ENCODE measurements at regions of chr19 and their contacts with region 1.

Region 1: GRCh38 chr19:3970808-3971598 is at the start of gene DAPK3:
- DNase-seq: peak; percentile 81
- H3K4me3 ChIP-seq: peak within 1 kb of the TSS; percentile 99
- H3K27me3 ChIP-seq: no peaks in the 10 kb centered on the region
- CTCF ChIP-seq: no peak
- polyA plus RNA-seq, gene DAPK3: 132 and 178 TPM in 2 replicates

Region 2: DNA sequence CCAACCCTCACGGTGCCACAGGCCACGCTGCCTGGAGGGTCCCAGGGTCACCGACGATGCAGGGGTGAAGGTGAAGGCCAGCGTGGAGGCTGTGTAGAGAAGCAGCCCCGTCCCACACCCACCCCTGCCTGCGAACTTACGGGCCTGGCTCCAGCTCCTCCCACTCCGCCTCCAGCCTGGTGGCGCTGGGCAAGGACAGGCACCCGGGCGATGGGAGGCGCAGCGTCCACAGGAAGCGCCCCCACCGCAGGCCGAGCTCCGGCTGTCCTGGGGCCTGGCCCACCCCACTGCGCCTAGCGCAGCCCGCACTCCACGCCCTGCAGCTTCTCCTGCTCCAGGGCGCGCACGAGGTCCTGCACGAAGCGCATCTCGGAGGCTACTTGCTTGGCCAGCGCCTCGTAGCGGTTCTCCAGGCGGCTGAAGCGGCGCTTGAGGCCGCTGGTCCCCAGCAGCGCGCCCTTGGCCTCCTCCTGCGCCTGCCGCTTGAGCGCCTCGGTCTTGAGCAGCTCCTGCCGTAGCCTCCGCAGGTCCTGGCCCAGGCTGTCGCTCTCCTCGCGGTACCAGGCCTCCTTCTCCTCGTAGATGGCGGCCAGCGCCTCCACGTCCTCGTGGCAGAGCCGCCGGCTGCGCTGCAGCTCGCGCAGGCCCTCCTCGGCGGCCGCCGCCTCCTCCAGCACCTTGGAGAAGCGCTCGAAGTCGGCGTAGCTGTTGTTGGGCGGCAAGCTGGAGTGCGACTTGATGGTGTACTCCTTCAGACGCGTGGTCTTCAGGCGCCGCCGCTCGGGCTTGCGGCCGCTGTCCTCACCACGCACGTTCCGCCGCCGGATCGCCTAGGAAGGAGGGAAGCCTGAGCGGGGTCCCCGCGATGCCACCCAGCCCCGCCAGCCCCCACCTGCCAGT is 11.9 kb before region 1 on chr19:
- CTCF ChIA-PET with region 1: no interaction called
- POLR2A ChIA-PET with region 1: interaction called, 13 read pairs
- DNase-seq: no peak
- H3K4me3 ChIP-seq: no peak overlapping the region
- H3K27me3 ChIP-seq: no peaks in the 10 kb centered on the region
- CTCF ChIP-seq: no peak

Region 3: GRCh38 chr19:3984908-3985642 is 14.1 kb after region 1 on chr19 and contains the start of gene EEF2:
- CTCF ChIA-PET with region 1: interaction called, 14 read pairs
- POLR2A ChIA-PET with region 1: interaction called, 18 read pairs
- DNase-seq: no peak
- H3K4me3 ChIP-seq: peak within 1 kb of the TSS; percentile 68
- H3K27me3 ChIP-seq: no peaks in the 10 kb centered on the region
- CTCF ChIP-seq: no peak
- polyA plus RNA-seq, gene EEF2: 1,661 and 2,469 TPM in 2 replicates

Region 4: DNA sequence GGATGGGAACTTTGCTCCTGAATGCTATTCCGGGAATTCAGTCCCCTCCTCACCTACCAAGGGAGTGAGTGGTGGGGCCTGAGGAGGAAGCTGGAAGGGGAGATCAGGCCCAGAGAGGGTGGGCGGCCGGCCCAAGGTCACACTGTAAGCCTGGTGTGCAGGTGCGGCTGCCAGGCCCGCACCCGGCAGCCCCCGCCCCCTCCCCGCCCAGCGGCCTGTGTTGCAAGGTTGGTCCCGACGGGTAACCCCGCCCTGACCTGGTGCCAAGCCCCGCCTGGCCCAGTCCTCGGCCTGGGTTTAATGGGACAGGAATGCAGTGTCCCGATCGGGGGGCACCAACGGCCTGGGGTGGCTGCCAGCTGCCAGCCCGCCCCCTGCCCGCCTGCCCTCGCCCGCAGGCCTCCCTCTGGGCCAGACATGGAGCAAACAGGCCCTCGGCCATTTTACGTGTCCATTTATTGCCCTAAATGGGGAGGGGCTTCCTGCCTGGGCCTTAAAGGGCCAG is 90.2 kb after region 1 on chr19:
- CTCF ChIA-PET with region 1: no interaction called
- POLR2A ChIA-PET with region 1: no interaction called
- DNase-seq: no peak
- H3K4me3 ChIP-seq: peak overlapping the region; percentile 31
- H3K27me3 ChIP-seq: no peaks in the 10 kb centered on the region
- CTCF ChIP-seq: no peak